Posterior vena cava (tissue), 2 donors: ENCODE measurements at regions of chr2 and their contacts with region 1.

Region 1: GRCh38 chr2:221671515-221671914 is 99.4 kb upstream of the EPHA4 start:
- DNase-seq: no peak

Region 2: DNA sequence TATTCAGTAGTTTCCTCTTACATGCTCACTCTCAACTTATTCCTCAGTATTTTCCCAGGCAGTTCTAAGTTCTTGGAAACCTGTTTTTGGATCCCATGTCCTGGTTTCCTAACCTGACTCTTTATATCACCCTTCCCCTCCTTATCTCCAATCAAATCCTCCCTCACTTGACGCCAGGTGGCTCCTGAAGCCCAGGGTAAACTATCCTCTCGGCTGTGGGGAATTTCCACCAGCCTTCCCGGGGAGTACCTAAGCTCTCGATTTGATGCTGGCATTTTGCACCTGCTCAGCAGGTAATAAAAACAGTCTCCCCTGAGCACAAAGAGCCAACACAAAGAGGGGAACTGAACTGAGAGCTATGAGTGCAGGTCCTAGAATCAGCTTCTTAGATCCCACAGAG is 1506.1 kb before region 1 on chr2:
- intact Hi-C with region 1: loop called in 1 of 2 experiments (anchors 5 kb)
- DNase-seq: peak; percentile 22

Region 3: DNA sequence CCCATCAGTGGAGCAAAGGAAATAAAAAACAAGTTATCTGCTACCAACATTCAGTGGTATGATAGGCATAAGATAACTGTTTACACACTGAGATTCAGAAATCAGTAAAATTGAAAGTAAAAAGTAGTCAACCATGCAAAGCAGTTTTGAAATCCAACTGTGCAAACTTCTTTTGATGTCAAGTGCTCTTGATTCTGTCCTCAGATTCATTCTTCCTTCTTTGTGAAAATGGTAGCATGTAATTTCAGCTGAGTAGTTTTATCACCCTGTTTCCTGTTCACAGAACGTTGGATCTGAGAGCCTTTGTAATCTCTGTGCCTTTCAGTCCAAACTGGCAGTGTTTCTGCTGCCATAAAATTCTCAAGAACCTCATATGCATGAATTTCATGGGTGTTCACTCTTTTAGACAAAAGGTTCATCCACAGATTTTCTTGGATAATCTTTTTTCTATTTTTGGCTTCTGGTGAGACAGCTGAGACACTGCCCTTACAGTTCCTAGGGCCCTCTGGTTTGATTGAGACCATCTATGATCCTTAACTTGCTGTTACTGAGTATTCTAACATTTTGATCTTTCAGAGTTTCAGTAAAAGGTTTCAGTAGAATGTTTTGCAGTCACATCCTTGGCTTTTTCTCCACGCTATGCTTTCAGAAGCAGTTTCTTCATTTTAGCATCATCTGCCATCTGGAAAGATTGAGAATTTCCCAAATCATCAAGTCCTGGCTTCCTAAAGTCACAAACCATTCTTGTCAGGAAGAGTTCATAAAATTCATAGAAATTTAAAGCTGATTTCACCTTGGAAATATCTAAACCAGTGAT is 172.9 kb after region 1 on chr2:
- intact Hi-C with region 1: no loop called
- DNase-seq: no peak